ENCODE measurements at regions of chr7 and their contacts with region 1.

Region 1: DNA sequence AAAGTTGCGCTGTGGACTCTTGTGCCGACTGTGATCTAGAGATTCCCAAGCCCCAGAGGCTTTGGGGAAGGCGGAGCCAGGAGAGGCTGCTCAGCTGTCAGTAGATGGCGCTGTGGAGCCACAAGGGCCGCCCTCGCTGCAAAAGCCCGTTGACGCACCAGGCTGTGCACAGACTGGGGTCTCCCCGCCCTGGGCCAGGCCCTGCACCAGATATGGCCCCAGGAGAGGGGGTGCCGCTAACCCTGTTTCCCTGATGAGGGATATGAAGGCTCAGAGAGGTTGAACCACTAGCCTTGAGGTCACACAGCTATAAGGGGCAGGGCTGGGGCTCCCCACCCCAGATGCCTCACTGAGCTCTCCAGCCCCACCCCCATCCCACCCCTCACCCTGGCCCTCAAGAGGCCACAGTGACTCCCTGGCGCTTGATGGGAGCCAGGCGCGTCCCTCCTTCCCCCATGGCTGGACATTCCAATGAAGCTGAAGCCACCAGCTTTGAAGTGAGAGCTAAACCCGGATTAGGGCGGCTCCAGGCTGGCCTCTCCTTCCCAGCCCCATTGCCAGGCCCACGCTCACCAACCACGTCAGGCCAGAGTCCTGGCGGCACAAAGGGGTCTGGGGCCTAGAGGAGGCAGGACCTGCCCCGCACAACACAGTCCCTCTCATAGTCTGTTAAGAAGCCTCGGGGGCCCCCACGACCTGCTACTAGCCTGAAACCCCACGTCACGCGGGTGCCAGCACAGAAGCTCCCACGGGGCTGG is 26.4 kb downstream of the MYL10 start:
- DNase-seq: no peak
- H3K4me3 ChIP-seq: no peak overlapping the region
- CTCF ChIP-seq: peak; percentile 95

Region 2: DNA sequence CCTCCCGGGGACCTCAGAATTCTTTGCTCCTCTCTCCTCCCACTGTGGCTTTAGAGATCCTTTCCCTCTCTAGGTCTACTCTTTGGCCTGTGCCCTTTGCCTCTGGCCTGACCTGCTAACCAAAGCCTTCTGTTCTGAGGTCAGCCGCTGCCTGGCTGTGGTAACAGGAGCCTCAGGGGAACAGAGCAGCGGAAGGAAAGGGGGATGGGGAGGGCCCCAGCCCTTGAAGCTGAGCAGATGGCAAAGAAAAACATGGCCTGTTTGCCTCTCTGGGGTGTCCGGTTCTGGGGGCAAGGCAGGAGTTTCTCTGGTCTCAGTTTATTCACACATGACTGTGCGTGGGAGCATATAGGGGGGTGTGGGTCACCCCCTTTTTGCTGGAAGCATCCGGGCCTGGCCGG is 211.8 kb before region 1 on chr7:
- CTCF ChIA-PET with region 1: no interaction called
- POLR2A ChIA-PET with region 1: no interaction called
- DNase-seq: no peak
- H3K4me3 ChIP-seq: no peak overlapping the region
- CTCF ChIP-seq: no peak

Region 3: DNA sequence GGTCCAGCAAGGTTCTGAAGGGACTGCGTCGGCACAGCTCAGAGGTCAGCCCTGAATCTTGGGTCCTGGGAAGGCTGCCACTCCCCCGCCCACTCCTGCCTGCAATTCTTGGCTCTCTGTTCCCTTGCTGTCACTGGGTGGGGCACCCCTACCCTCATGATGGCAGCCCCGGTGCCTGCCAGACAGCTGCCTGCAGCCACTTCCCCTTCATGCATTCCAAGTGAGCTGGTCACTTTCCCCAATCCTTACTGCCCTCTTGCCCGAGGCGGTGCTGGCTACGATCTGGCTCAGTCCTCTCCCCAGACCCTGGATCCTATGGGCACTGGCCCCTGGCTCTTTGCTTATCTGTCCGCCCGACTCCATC is 12.3 kb after region 1 on chr7:
- CTCF ChIA-PET with region 1: interaction called, 58 read pairs
- POLR2A ChIA-PET with region 1: no interaction called
- DNase-seq: no peak
- H3K4me3 ChIP-seq: no peak overlapping the region
- CTCF ChIP-seq: no peak

Region 4: DNA sequence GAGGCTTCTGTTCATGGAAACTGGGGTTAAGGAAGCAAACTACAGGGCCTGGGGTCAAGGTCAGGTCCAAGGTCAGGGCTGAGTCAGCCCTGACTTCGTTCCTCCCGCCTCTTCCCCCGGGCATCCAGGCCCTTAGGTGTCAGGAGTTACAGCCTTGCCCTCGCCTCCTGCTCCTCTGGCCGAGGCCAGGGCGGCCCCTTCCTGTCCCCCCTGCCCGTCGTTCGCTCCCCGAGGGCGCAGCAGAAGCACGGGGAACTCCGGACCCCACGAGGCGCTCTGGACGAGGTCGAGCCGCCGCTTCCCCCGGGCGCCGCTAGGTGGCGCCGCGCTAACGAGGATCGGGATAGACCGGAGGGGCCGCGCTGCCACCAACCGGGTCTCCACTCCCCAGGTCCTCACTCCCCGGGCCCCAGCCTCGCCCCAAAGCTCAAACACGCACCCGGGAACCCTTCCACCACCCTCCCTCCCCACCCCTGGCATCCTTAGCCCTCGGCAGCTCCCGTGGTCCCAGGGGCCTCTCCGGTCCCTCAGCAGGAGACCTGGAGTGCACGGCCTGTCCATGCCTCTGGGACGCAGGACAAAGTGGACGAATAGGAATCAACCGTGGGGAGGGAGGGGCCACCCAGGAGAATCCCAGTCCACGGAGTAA is 85.6 kb after region 1 on chr7:
- CTCF ChIA-PET with region 1: interaction called, 14 read pairs
- POLR2A ChIA-PET with region 1: no interaction called
- DNase-seq: no peak
- H3K4me3 ChIP-seq: peak overlapping the region; percentile 40
- CTCF ChIP-seq: peak; percentile 96

Region 5: GRCh38 chr7:102236592-102237287 is 634.1 kb after region 1 on chr7:
- CTCF ChIA-PET with region 1: interaction called, 28 read pairs
- POLR2A ChIA-PET with region 1: no interaction called
- DNase-seq: no peak
- H3K4me3 ChIP-seq: no peak overlapping the region
- CTCF ChIP-seq: peak; percentile 77

Region 6: DNA sequence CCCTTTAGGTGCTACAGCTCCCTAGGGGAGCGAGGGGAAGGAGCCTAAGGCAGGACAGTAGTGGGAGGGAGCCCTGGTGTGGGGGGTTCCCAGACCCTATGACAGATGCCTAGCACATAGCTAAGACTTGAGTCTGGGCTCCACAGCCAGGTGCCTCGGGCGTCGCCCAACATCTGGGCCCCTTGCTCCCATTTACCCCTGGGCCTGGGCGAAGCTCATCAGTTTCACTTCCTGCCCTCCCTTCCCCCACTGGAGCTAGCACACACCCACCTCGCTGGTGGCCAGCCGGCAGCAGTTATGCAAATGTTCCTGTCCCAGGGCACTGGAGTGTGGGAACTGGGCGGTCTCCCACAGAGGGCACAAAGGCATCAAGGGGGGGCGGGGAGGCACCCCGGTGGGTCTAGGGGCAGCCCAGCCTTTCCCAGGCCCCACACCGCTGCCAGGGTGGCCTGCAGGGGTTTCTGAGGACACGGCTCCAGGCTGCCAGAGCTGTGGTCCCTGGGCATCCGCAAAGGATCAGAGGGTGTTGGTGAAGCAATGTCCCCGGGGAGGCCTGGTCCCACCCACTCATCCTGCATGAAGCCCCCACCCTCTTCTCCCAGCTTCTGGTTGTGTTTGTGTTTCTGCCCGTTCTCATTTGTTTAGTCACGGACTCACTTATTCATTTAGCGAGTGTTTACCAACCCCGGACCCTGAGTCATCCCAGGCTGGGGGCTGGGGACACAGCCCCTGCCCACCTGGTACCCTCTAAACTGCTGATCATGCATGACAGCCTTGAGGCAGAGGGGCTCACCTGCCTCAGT is 704.4 kb after region 1 on chr7:
- CTCF ChIA-PET with region 1: no interaction called
- POLR2A ChIA-PET with region 1: no interaction called
- DNase-seq: no peak
- H3K4me3 ChIP-seq: peak overlapping the region; percentile 24
- CTCF ChIP-seq: no peak